AG04449 (cell line): ENCODE measurements at regions of chr15 and their contacts with region 1.

Region 1: DNA sequence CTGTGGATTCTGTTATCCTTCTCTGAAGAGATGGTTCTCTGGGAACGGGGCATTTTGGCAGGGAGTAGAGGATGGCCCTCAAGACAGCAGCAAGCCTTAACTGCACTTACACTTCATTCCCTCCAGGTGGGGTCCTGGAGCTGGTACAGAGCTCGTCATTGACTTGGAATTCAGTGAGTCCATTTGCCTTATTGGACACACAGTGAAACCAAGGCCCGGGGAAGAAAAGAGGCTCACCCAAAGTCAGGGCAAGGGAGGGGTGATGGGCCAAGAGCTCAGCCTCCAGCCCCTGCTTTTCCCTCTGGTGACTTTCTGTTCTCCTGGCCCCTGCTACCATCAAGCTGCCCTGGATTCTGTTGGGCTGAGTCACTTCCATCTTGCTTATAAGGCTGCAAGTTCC is 125.6 kb downstream of the ETFA start:
- DNase-seq: no peak
- H3K4me3 ChIP-seq: no peak overlapping the region
- CTCF ChIP-seq: peak; percentile 59

Region 2: DNA sequence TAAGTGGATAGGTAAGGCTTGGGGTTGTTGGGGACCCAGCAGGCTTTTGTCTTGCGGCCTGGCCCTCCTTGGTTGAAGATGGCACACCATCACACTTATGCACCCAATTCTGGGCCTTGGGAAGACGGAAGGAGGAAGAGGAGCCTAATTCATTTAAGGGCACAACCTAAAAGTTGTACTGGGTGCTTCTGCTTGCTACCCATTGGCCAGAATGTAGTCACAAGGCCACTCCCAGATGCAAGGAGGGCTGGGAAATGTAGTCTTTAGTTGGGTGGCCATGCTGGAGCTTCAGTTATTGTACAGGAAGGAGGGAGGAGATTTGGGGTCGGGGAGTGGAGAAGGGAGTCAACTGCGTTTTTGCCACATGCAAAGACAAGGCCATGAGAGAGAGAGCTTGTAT is 16.7 kb before region 1 on chr15:
- CTCF ChIA-PET with region 1: interaction called, 14 read pairs
- POLR2A ChIA-PET with region 1: no interaction called
- DNase-seq: no peak
- H3K4me3 ChIP-seq: no peak overlapping the region
- CTCF ChIP-seq: no peak

Region 3: DNA sequence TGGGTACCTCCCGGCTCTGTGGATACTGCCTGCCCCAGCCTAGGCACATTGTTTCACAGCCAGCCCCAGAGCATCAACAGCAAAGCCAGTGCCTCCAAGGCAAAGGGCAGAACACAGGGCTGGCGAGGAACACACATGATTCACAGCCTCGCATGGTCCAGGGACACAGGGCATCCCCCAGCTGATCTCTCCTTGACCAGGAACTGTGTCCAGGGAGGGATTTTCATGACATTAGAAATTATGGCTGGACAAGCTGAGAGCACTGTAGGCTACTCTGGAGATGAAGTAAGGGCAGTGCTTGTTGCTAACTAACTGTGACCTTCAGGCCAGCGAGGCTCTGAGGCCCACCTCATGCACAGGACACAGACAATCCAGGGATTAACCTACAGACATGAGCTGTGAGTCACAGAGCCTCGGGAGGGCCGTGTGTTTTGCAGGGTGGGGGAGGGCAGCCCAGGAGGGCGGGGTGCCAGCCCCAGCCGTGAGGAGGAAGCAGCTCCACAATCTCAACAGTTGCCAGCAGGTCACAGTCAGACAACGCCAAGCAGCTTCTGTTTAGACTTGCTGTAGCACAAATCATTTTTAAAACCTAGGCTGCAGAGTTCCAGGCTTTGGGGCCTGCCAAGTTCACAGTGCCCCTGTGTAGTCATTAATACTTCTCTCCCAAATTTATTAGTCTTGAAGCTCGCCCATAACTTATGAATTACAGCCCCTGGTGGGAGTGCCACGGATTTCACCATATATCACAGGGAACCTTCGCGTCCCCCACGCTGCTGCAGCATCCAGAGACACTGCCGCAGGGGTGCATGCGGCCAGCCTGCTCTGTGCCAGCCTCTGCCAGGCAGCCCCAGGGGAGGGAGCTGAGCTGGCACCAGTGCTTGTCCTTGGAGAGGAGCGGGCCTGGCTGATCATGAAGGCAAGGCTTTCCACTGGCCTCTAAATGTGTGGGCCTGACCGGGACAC is 10.8 kb after region 1 on chr15:
- CTCF ChIA-PET with region 1: interaction called, 40 read pairs
- POLR2A ChIA-PET with region 1: no interaction called
- DNase-seq: peak; percentile 42
- H3K4me3 ChIP-seq: no peak overlapping the region
- CTCF ChIP-seq: no peak

Region 4: GRCh38 chr15:76330080-76330680 is 144.5 kb after region 1 on chr15:
- CTCF ChIA-PET with region 1: interaction called, 47 read pairs
- POLR2A ChIA-PET with region 1: no interaction called
- DNase-seq: no peak
- H3K4me3 ChIP-seq: no peak overlapping the region
- CTCF ChIP-seq: peak; percentile 76

Region 5: DNA sequence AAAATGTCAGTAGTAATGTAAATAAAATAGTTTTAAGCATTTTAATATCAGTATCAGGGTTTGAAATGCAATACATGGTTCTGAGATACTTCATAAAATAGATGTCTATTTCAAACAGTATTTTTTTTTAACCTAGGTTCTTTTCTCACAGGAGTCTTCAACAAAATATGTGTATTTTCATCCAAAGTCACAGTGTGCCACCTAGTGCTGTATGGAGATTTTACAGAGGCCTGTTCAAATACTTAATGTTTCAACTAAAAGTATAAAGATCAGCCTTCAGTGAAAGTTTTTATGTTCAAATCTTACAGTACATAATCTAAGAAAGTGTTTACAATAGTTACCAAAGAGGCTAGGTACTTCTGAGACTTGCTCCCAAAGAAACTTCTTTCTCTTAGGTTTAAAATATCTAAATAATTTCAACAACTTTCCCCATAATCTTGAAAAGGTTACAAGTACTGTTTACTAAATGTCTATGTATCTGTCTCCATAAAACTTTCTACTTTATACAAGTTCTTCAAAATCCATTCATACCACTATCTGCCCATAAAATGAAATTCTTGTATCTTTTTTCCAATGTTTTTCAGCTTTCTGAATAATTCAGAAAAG is 681.1 kb after region 1 on chr15:
- CTCF ChIA-PET with region 1: interaction called, 41 read pairs
- POLR2A ChIA-PET with region 1: no interaction called
- DNase-seq: peak; percentile 10
- H3K4me3 ChIP-seq: no peak overlapping the region
- CTCF ChIP-seq: peak; percentile 43